Activated B cell treated with CpG ODN at 0.5 μM for 24 hours (primary cell): ENCODE measurements at regions of chr5 and their contacts with region 1.

Region 1: DNA sequence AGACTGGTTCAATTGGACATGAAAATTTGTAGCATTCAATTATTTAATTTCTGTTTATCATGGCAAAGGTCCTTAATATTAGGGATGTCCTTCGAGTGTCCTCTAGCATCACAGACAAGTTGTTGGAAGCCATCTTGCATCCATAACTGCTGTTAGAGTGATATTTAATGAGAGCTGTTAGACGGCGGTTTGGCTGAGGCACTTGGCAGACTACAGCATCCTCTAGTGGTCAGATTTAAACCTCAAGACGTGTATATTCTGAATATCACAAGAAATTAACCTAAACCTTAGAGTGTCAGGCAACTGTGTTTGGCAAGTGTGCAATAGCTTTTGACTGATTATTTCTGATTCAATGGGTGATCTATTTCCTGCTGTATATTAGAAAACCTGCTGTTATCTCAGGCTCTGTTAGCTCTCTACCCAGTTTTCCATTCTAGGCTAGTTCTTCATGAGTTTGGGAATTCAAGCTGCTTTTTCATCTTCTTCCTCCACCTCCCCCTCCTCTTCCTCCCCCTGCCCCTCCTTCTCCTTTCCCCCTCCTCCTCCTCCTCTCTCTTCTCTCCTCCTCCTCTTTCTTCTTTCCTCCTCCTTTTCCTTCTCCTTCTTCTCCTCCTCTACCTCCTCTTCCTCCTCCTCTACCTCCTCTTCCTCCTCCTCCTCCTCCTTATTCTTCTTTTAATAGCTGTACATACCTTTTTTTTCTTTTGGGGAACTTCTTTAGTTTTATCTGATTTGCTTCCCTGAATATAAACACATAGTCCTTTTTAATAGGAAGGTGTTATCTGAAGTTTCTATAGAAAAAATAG is 8.6 kb downstream of the SPINK1 start:
- DNase-seq: no peak
- ATAC-seq: peak; percentile 72
- H3K4me3 Mint-ChIP-seq: no peak overlapping the region
- H3K27ac Mint-ChIP-seq: no peak overlapping the region
- H3K4me1 Mint-ChIP-seq: no peaks in the 10 kb centered on the region
- H3K27me3 Mint-ChIP-seq: peaks cover 6% of the 10 kb centered on the region
- CTCF ChIP-seq: peak; percentile 73

Region 2: GRCh38 chr5:146082798-146083197 is 1740.1 kb before region 1 on chr5:
- CTCF ChIA-PET with region 1: no interaction called
- POLR2A ChIA-PET with region 1: no interaction called
- intact Hi-C with region 1: no loop called
- DNase-seq: no peak
- ATAC-seq: no peak
- H3K4me3 Mint-ChIP-seq: no peak overlapping the region
- H3K27ac Mint-ChIP-seq: no peak overlapping the region
- H3K4me1 Mint-ChIP-seq: peaks cover 10% of the 10 kb centered on the region
- H3K27me3 Mint-ChIP-seq: peaks cover 7% of the 10 kb centered on the region
- CTCF ChIP-seq: no peak

Region 3: GRCh38 chr5:146541958-146542849 is 1280.7 kb before region 1 on chr5:
- CTCF ChIA-PET with region 1: no interaction called
- POLR2A ChIA-PET with region 1: no interaction called
- intact Hi-C with region 1: loop called (anchors 2 kb)
- DNase-seq: peak; percentile 36
- ATAC-seq: peak; percentile 81
- H3K4me3 Mint-ChIP-seq: no peak overlapping the region
- H3K27ac Mint-ChIP-seq: no peak overlapping the region
- H3K4me1 Mint-ChIP-seq: peaks cover 2% of the 10 kb centered on the region
- H3K27me3 Mint-ChIP-seq: peaks cover 5% of the 10 kb centered on the region
- CTCF ChIP-seq: peak; percentile 33

Region 4: GRCh38 chr5:147453875-147454814 is 368.7 kb before region 1 on chr5:
- CTCF ChIA-PET with region 1: interaction called, 5 read pairs
- POLR2A ChIA-PET with region 1: no interaction called
- intact Hi-C with region 1: loop called (anchors 1 kb)
- DNase-seq: peak; percentile 55
- ATAC-seq: peak; percentile 57
- H3K4me3 Mint-ChIP-seq: peak overlapping the region; percentile 85
- H3K27ac Mint-ChIP-seq: no peak overlapping the region
- H3K4me1 Mint-ChIP-seq: peaks cover 15% of the 10 kb centered on the region
- H3K27me3 Mint-ChIP-seq: peaks cover 54% of the 10 kb centered on the region
- CTCF ChIP-seq: no peak

Region 5: DNA sequence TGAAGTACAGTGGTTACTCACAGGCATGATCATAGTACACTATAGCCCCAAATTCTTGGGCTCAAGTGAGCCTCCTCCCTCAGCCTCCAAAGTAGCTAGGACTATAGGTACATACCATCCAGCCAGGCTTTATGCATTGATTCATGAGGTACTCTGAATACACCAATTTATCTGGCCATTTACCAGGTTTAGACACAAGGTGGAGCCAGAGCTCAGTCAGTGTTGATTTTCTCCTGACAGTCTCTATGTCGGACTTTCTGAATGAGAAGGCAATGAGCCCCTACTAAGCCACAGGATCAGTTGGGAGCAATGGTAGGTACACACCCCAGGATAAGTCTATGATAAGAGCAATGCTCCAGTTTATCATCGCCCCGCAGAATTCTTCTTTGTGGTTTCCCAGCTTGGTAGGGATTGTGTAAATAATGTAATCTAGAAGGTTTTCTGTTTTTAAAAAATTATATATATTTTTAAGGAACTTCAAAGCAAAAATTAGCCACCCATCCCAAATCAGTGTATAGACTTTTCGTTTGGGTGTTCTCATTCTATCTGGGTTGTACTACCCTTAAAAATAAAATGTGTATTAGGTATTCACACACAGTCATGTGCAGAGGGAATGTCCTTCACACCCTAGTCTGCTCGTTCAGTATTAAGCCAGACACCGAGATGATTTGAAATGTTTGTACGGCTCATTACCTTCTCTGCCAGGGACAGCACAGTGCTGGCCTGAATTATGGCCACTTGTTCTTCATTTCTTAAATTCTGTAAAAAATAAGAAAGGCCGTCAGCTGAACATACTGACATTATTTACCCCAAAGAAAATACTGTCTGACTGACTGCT is 194.6 kb before region 1 on chr5:
- CTCF ChIA-PET with region 1: interaction called, 135 read pairs
- POLR2A ChIA-PET with region 1: no interaction called
- intact Hi-C with region 1: loop called (anchors 1 kb)
- DNase-seq: no peak
- ATAC-seq: peak; percentile 72
- H3K4me3 Mint-ChIP-seq: no peak overlapping the region
- H3K27ac Mint-ChIP-seq: no peak overlapping the region
- H3K4me1 Mint-ChIP-seq: no peaks in the 10 kb centered on the region
- H3K27me3 Mint-ChIP-seq: no peaks in the 10 kb centered on the region
- CTCF ChIP-seq: no peak